CD4-positive, alpha-beta T cell (primary cell): ENCODE measurements at regions of chr12 and their contacts with region 1.

Region 1: DNA sequence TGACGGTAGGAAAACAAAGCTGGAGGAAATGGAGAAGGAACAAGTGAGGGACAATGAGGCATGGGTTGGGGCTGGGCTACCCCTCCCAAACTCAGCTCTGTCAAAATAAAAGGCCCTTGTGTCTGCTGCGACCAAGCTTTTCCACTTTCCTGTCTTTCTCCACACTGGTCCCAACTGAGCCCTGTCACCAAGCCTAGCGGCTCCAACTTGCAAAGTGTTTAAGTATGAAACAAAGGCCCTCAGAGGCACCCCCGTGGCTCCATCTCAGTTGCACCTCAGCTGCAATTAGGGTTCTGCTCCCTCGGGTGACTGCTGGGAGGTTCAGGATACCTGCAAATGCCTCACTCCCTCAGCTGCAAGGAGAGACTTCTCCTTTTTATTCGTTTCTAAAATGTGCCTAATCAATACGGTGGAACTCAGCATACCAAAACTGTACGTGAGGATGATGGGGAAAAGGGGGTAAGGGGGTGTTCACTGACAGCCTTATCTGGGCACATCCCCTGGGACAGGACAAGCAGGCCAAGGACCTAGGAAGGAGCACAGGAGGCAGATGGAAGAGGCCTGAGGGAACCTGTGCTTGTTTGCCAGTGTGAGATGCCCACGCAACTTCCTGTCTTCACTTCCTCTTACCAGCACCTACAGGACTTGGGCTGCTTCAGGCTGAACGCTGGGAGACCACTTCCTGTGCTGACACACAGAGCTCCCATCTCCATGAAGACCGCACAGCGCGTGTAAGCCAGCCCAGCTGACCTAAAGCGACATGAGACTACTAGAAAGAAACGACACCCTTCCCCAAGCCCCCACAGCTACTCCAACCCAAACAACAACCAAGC is 8.9 kb downstream of the VAMP1 start:
- DNase-seq: peak; percentile 59 to 96 (median 78)
- ATAC-seq: peak; percentile 82
- H3K4me3 ChIP-seq: peak overlapping the region; percentile 35
- H3K4me3 Mint-ChIP-seq: peak overlapping the region; percentile 79
- H3K27ac ChIP-seq: peak overlapping the region; percentile 94 to 97
- H3K27ac Mint-ChIP-seq: peak overlapping the region; percentile 92
- H3K4me1 ChIP-seq: peaks cover 91% of the 10 kb centered on the region
- H3K4me1 Mint-ChIP-seq: peaks cover 85% of the 10 kb centered on the region
- H3K27me3 ChIP-seq: no peaks in the 10 kb centered on the region
- H3K27me3 Mint-ChIP-seq: no peaks in the 10 kb centered on the region
- CTCF ChIP-seq: no peak

Region 2: DNA sequence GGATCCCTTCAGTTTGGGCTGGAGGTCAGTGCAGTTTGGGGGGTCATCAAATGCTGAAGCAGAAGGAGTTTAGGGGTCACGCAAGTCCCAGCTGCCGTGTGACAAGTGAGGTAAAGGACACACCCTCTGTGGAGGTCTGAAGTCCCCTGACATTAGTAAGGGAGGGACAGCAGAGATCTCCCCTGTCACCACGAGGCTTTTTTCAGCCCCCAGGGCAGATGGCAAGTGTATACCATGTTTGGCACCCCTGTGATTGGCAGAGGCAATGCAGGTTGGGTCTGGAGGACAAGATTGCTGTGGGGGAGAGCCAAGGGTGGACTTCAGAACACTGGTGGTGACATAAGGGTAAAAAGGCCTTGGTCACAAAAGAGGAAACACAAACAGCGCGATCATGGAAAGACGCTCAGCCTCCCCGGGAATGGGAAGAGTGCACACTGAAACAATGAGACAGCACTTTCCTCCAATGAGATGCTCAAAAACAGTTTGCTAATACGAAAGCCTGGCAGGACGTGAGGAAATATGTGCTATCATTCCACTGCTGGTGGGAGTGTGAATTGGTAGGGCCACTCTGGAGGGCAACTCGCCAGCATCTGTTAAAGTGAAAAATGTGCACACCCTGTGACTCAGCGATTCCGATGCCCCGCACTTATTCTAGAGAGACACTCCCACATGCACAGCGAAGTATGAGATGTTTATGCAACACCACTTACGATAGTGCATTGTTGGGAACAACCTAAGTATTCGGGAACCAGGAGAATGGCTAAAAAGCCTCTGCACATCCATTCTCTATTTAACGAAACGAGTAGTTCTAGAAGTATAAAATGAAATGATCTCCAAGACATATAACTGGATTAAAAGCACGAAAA is 31.3 kb before region 1 on chr12:
- CTCF ChIA-PET with region 1: interaction called, 61 read pairs
- POLR2A ChIA-PET with region 1: interaction called, 99 read pairs
- intact Hi-C with region 1: no loop called
- DNase-seq: peak in 3 of 14 experiments; percentile 34 to 48 (median 43)
- ATAC-seq: no peak
- H3K4me3 ChIP-seq: peak overlapping the region; percentile 3
- H3K4me3 Mint-ChIP-seq: no peak overlapping the region
- H3K27ac ChIP-seq: no peak overlapping the region
- H3K27ac Mint-ChIP-seq: peak overlapping the region; percentile 56
- H3K4me1 ChIP-seq: peaks cover 62% of the 10 kb centered on the region
- H3K4me1 Mint-ChIP-seq: peaks cover 70% of the 10 kb centered on the region
- H3K27me3 ChIP-seq: no peaks in the 10 kb centered on the region
- H3K27me3 Mint-ChIP-seq: no peaks in the 10 kb centered on the region
- CTCF ChIP-seq: no peak

Region 3: DNA sequence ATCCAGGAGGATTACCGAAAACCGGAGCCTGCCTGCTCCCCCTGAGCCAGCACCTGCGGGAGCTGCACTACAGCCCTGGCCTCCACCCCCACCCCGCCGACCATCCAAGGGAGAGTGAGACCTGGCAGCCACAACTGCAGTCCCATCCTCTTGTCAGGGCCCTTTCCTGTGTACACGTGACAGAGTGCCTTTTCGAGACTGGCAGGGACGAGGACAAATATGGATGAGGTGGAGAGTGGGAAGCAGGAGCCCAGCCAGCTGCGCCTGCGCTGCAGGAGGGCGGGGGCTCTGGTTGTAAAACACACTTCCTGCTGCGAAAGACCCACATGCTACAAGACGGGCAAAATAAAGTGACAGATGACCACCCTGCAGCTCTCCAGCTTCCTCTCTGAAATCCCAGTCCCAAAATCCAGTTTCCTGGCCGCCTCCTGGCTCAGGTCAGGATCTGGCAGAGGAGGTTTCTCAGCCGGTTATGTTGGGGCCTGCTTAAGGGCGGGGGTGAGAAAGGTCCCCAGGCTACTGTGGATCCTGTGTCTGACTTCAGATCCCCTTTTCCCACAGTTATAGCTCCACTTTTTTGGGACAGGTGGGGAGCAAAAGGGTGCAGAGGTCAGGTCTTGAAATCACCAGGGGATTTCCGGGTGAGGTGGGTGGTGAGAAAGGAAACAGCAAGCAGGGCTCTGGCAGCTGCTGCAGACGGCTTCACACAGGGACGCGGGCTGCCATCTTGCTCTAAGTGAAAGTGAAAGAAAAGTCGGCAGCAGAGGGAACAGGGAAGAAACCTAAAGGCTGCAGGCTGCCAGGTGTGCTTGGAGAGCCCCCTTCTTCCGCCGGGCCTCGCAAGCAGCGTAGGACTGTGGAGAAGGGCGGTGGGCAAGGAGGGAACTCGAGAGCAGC is 10.0 kb before region 1 on chr12 and contains the start of gene TAPBPL:
- CTCF ChIA-PET with region 1: interaction called, 18 read pairs
- POLR2A ChIA-PET with region 1: interaction called, 225 read pairs
- intact Hi-C with region 1: loop called (anchors 1 to 2 kb)
- DNase-seq: peak; percentile 61 to 95 (median 74)
- ATAC-seq: peak; percentile 92
- H3K4me3 ChIP-seq: peak within 1 kb of the TSS; percentile 97
- H3K4me3 Mint-ChIP-seq: peak within 1 kb of the TSS; percentile 94
- H3K27ac ChIP-seq: peak within 1 kb of the TSS; percentile 96 to 99
- H3K27ac Mint-ChIP-seq: peak within 1 kb of the TSS; percentile 98
- H3K4me1 ChIP-seq: peaks cover 71% of the 10 kb centered on the region
- H3K4me1 Mint-ChIP-seq: peaks cover 77% of the 10 kb centered on the region
- H3K27me3 ChIP-seq: no peaks in the 10 kb centered on the region
- H3K27me3 Mint-ChIP-seq: no peaks in the 10 kb centered on the region
- CTCF ChIP-seq: no peak
- total RNA-seq, gene TAPBPL: 14.7 to 15.8 TPM

Region 4: GRCh38 chr12:6533923-6534694 is 72.5 kb after region 1 on chr12 and contains the start of gene GAPDH:
- CTCF ChIA-PET with region 1: interaction called, 31 read pairs
- POLR2A ChIA-PET with region 1: interaction called, 46 read pairs
- intact Hi-C with region 1: no loop called
- DNase-seq: peak in 12 of 14 experiments; percentile 69 to 93 (median 81)
- ATAC-seq: peak; percentile 6
- H3K4me3 ChIP-seq: peak within 1 kb of the TSS; percentile 88
- H3K4me3 Mint-ChIP-seq: peak within 1 kb of the TSS; percentile 96
- H3K27ac ChIP-seq: peak within 1 kb of the TSS; percentile 91 to 93
- H3K27ac Mint-ChIP-seq: peak within 1 kb of the TSS; percentile 90
- H3K4me1 ChIP-seq: peaks cover 64% of the 10 kb centered on the region
- H3K4me1 Mint-ChIP-seq: peaks cover 53% of the 10 kb centered on the region
- H3K27me3 ChIP-seq: no peaks in the 10 kb centered on the region
- H3K27me3 Mint-ChIP-seq: no peaks in the 10 kb centered on the region
- CTCF ChIP-seq: no peak
- total RNA-seq, gene GAPDH: 498 to 508 TPM

Region 5: DNA sequence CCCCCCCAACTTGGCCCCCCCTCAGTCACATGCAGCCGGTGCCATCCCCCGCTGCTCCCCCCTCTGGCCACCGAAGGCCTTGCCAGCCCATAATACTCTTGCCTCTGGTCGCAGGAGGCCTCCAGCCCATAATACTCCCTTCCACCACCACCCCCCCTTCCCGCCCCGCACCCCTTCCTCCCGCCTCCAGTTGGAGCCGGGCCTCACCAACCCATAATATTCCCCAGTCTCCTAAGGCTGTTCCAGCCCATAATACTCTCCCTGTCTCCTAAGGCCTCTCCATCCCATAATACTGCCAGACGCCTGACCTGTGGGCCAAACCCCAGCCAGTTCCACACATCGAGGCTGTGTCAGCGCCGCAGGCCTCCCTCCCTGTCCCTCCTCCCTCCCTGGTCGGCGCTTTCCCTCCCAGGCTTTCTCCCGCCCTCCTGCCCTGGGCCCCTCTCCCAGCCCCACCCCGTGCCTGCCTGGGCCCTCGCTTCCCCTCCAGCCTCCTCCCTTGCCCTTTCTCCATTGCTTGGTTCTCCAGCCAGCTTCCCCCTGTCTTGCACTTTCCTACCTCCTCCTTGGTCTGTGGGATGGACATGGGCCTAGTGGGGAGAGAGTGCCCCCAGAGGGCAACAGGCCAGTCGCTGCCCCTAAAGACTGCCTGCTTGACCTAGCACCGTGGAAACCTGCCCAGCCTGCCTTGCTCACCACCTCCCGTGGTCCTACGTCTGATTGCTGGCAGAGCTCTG is 152.3 kb after region 1 on chr12:
- CTCF ChIA-PET with region 1: no interaction called
- POLR2A ChIA-PET with region 1: no interaction called
- intact Hi-C with region 1: no loop called
- DNase-seq: peak in 9 of 14 experiments; percentile 16 to 84 (median 46)
- ATAC-seq: peak; percentile 36
- H3K4me3 ChIP-seq: no peak overlapping the region
- H3K4me3 Mint-ChIP-seq: peak overlapping the region; percentile 31
- H3K27ac ChIP-seq: peak overlapping the region; percentile 40 to 47
- H3K27ac Mint-ChIP-seq: peak overlapping the region; percentile 84
- H3K4me1 ChIP-seq: peaks cover 43% of the 10 kb centered on the region
- H3K4me1 Mint-ChIP-seq: peaks cover 47% of the 10 kb centered on the region
- H3K27me3 ChIP-seq: no peaks in the 10 kb centered on the region
- H3K27me3 Mint-ChIP-seq: no peaks in the 10 kb centered on the region
- CTCF ChIP-seq: no peak

Region 6: DNA sequence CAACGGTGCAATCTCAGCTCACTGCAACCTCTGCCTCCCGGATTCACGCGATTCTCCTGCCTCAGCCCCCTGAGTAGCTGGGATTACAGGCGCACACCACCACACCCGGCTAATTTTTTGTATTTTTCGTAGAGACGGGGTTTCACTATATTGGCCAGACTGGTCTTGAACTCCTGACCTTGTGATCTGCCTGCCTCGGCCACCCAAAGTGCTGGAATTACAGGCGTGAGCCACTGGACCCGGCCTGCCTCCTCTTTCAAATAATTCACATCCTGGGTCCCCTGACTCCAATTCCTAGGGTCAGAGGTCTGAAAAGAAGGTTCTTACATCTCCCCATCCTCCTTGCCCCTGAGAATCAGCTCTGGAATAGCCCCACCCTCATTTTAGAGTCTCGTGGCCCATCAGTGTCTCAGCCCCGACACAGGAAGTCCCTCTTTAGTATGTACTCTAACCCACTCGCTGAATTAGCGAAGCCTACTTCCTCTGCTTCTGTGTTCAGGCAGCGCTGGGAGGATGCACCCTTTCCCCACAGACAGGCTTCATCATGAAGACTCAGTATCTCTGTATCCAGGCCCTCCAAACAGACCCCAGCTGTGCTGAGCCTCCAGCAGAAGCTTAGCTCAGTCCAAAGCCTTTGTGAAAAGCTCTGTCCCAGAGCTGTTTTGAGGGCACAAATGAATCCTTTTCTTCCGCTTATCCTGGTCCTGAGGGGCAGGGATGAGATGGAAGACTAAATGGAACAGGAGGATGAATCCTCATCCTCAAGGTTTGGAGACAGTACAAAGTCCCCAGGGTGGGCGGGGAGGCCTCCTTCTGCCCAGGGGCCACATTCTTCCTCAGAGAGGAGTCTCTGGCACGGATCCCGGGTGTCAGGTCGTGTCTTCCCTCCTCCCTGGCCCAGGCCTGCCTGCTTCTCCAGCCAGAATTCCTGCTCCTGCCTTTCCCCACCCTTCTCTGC is 170.7 kb after region 1 on chr12:
- CTCF ChIA-PET with region 1: no interaction called
- POLR2A ChIA-PET with region 1: no interaction called
- intact Hi-C with region 1: no loop called
- DNase-seq: peak in 13 of 14 experiments; percentile 29 to 84 (median 47)
- ATAC-seq: peak; percentile 81
- H3K4me3 ChIP-seq: peak overlapping the region; percentile 51
- H3K4me3 Mint-ChIP-seq: peak overlapping the region; percentile 78
- H3K27ac ChIP-seq: peak overlapping the region; percentile 66 to 67
- H3K27ac Mint-ChIP-seq: peak overlapping the region; percentile 91
- H3K4me1 ChIP-seq: peaks cover 70% of the 10 kb centered on the region
- H3K4me1 Mint-ChIP-seq: peaks cover 63% of the 10 kb centered on the region
- H3K27me3 ChIP-seq: no peaks in the 10 kb centered on the region
- H3K27me3 Mint-ChIP-seq: no peaks in the 10 kb centered on the region
- CTCF ChIP-seq: no peak